Naive thymus-derived CD4-positive, alpha-beta T cell (primary cell): ENCODE measurements at regions of chr11 and their contacts with region 1.

Region 1: GRCh38 chr11:26743622-26744021 is 21.8 kb upstream of the SLC5A12 start:
- DNase-seq: no peak
- ATAC-seq: no peak
- H3K4me3 ChIP-seq: no peak overlapping the region
- H3K4me3 Mint-ChIP-seq: no peak overlapping the region
- H3K27ac ChIP-seq: no peak overlapping the region
- H3K27ac Mint-ChIP-seq: no peak overlapping the region
- H3K4me1 ChIP-seq: no peaks in the 10 kb centered on the region
- H3K4me1 Mint-ChIP-seq: no peaks in the 10 kb centered on the region
- H3K27me3 ChIP-seq: no peaks in the 10 kb centered on the region
- H3K27me3 Mint-ChIP-seq: no peaks in the 10 kb centered on the region

Region 2: DNA sequence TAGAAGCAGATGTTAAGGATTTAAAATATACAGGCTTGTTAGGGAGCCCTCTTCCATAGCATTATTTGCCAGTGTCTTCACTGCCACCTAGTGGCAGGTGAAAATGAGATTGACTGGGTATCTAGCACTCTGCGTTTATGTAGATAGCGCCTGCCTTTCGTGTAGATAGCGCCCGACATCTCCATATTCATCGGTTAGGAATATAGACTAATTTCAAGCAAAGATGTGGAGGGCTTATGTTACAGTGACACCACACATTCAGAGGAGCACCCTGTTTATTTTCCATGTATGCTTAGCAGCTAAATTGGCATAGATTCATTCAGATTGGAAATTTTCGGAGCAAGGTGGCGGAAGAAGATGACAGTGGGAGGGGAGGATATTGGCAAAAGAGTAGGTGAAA is 93.7 kb before region 1 on chr11:
- CTCF ChIA-PET with region 1: no interaction called
- POLR2A ChIA-PET with region 1: no interaction called
- intact Hi-C with region 1: no loop called
- DNase-seq: peak in 1 of 9 donors; percentile 21
- ATAC-seq: no peak
- H3K4me3 ChIP-seq: no peak overlapping the region
- H3K4me3 Mint-ChIP-seq: no peak overlapping the region
- H3K27ac ChIP-seq: no peak overlapping the region
- H3K27ac Mint-ChIP-seq: no peak overlapping the region
- H3K4me1 ChIP-seq: no peaks in the 10 kb centered on the region
- H3K4me1 Mint-ChIP-seq: no peaks in the 10 kb centered on the region
- H3K27me3 ChIP-seq: no peaks in the 10 kb centered on the region
- H3K27me3 Mint-ChIP-seq: no peaks in the 10 kb centered on the region

Region 3: DNA sequence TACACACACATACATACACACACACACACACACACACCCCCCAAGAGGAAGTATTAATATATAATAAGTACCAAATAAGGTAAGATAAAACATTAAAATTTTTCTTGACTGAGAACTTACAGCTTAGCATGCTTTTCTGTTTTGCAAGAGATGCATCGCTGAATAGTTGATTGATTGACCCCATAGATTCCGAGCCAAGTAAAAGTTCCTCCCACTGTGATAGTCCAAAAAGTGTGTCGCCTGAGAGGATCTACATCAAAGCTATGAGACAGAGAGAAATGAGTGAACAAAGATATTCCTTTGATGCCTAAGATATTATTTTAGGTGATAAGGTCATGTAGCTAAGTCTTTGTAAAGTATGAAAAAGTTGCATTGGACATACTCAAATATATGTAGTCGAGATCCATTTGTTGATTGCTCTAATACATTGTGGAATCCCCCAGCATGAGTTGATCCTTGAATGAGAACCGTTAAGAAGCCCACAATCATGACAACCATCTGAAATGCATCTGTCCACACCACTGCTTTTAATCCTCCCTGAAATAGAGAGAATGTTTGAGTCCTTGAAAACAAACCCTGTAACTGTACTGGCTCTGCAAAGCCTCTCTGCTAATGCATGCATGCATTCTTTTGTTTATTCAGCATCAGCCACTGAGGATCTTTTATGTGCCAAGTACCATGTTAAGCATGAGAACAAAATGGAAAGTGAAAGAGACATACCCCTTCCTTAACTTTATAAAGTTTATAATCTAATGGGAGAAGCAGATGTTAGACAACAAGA is 40.0 kb before region 1 on chr11:
- CTCF ChIA-PET with region 1: no interaction called
- POLR2A ChIA-PET with region 1: no interaction called
- intact Hi-C with region 1: loop called in 1 of 2 experiments (anchors 1 kb)
- DNase-seq: no peak
- ATAC-seq: no peak
- H3K4me3 ChIP-seq: no peak overlapping the region
- H3K4me3 Mint-ChIP-seq: no peak overlapping the region
- H3K27ac ChIP-seq: no peak overlapping the region
- H3K27ac Mint-ChIP-seq: no peak overlapping the region
- H3K4me1 ChIP-seq: no peaks in the 10 kb centered on the region
- H3K4me1 Mint-ChIP-seq: no peaks in the 10 kb centered on the region
- H3K27me3 ChIP-seq: no peaks in the 10 kb centered on the region
- H3K27me3 Mint-ChIP-seq: no peaks in the 10 kb centered on the region